ENCODE measurements at regions of chr14 and their contacts with region 1.

Region 1: DNA sequence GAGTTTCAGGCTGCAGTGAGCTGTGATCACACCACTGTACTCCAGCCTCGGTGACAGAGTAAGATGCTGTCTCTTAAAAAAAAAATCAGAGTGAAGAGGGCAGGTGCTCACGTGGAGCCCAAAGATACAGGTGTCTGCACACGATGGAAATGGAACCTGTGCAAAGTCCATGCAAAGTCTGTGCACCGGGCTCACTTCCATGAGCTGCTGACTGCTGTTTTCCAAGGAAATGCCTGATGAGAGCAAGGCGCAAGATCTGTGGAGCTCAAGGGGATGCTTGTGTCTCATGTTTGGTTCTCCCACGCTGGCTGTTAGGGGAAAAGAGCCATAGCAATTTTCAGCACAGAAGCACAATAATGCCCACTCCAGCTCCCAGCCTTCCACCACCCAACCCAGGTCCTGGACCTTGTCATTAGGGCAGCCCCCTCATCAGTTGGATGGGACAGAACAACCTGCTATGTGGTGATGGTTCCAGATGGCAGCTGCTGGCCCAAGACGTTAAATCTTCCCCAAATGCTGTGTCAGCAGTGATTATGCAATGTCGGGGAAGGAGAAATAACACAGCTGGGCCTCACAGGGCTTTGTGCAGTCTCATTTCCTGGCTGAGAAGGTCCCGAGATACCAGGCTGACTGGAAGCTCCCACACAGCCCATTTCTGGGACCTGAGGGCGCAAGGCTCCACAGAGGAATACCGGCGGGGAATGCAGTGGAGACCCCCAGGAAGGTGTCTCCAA is 27.9 kb upstream of the DICER1 start:
- DNase-seq: peak; percentile 41 to 74
- ATAC-seq: peak; percentile 77 to 90 (median 81)
- H3K4me3 ChIP-seq: peak overlapping the region in 4 of 10 donors; percentile 2 to 44 (median 13)
- H3K27ac ChIP-seq: peak overlapping the region; percentile 66 to 93 (median 86)
- H3K4me1 ChIP-seq: peaks cover 20 to 81% (median 59%) of the 10 kb centered on the region in 9 donors
- H3K27me3 ChIP-seq: peaks cover 0 to 10% (median 3%) of the 10 kb centered on the region in 7 donors
- CTCF ChIP-seq: no peak

Region 2: DNA sequence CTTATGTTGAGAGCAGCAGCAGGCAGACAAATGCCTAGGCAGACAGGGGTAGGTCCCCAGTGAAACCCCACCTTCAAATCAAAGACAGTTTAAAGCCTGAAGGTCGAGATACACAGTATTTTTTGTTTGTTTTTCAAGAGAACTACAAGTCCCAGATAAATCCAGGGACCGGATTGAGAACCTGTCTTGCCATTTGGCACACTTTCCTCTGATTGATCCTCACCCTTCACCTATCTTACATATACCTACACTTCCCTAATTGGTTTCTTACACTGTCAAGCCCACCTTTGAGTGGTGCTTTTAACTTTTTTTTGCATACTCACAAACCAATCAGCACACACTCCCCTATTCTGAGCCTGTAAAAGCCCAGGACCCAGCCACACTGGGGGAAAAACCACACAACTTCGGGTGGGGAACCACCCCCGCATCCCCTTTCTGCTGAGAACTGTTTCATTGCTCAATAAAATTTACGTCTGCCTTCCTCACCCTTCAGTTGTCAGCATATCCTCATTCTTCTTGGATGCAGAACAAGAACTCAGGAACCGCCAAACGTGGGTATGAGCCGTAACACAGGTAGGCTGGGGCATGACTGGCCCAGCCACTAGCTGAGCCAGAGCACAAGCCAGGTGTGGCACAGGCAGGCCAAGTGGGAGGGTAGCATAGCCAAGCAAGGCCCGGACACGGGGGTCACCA is 39.0 kb before region 1 on chr14:
- intact Hi-C with region 1: loop called in 2 of 10 experiments (anchors 5 kb)
- DNase-seq: no peak
- ATAC-seq: no peak
- H3K4me3 ChIP-seq: no peak overlapping the region
- H3K27ac ChIP-seq: peak overlapping the region in 2 of 10 donors; percentile 13 to 27
- H3K4me1 ChIP-seq: peaks cover 0 to 85% (median 58%) of the 10 kb centered on the region in 9 donors
- H3K27me3 ChIP-seq: no peaks in the 10 kb centered on the region
- CTCF ChIP-seq: no peak

Region 3: GRCh38 chr14:95163132-95163531 is 22.1 kb before region 1 on chr14:
- intact Hi-C with region 1: loop called in 2 of 10 experiments (anchors 2 to 5 kb)
- DNase-seq: no peak
- ATAC-seq: no peak
- H3K4me3 ChIP-seq: no peak overlapping the region
- H3K27ac ChIP-seq: peak overlapping the region in 1 of 10 donors; percentile 64
- H3K4me1 ChIP-seq: peaks cover 3 to 33% (median 8%) of the 10 kb centered on the region in 9 donors
- H3K27me3 ChIP-seq: no peaks in the 10 kb centered on the region
- CTCF ChIP-seq: no peak

Region 4: DNA sequence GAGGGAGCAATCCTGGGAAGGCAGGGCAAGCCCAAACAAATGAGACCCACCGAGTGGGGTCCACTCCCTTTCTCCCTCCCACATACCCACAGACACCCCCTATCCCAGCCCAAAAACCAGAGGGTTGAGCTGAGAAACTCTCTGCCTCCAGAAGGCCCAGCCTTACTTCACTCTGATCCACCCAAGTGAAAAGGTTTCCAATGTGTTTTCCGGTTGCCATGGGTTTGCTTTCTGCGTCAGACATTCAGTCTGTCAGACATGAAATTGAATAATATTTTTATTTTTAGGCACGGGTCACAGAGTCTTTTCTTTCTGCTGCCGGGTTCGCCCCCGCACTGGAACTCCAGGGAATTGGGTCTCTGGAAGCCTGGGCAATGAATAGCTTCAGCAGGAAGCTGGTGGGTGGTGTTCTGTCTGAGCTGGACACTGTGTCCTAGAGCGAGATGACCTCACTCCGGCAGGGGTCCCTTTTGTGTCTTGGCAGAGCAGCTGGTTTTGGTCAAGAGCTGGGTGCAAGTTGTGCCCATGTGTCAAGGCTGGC is 204.3 kb after region 1 on chr14:
- intact Hi-C with region 1: loop called in 1 of 10 experiments (anchors 10 kb)
- DNase-seq: peak; percentile 77 to 93
- ATAC-seq: peak; percentile 88 to 97 (median 96)
- H3K4me3 ChIP-seq: no peak overlapping the region
- H3K27ac ChIP-seq: peak overlapping the region; percentile 72 to 94 (median 83)
- H3K4me1 ChIP-seq: peaks cover 10 to 34% (median 15%) of the 10 kb centered on the region in 9 donors
- H3K27me3 ChIP-seq: peaks cover 0 to 4% (median 0%) of the 10 kb centered on the region in 7 donors
- CTCF ChIP-seq: no peak

Measured in heart right ventricle (tissue), 16 donors.